MCF 10A (cell line): ENCODE measurements at regions of chr17 and their contacts with region 1.

Region 1: DNA sequence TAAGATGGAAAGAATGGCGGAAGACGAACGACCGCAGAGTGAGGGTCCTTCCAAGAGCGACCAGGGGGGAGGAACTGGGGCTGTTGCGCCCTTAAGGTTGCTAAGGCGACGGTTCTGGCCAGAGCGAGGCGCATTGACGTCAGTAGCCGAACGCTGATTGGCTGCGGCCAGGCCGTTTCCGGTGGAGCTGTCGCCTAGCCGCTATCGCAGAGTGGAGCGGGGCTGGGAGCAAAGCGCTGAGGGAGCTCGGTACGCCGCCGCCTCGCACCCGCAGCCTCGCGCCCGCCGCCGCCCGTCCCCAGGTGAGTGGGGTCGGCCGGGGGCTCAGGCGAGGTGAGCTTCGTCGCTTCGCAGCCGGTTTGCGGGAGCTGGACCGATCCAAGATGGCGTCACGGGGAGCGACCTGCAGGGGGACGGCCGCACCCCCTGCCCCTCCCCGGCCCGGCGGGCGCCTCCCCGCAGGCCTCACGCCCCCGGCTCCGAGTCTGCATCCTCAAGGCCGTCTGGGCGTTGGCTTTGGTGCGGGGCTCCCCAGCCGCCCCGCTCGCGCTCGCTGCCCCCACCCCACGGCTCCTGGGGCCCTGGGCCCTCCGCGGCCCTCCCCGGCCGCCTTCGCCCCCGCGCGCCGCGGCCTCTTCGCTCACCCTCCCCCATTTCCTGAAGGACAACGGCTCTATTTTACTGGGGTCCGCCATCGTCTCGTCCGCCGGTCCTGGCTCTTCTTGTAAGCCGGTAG is at the start of gene PRKAR1A:
- DNase-seq: peak; percentile 91
- H3K4me3 Mint-ChIP-seq: peak within 1 kb of the TSS; percentile 95
- H3K27ac Mint-ChIP-seq: peak within 1 kb of the TSS; percentile 98
- H3K4me1 Mint-ChIP-seq: peaks cover 25% of the 10 kb centered on the region
- H3K27me3 Mint-ChIP-seq: no peaks in the 10 kb centered on the region
- CTCF ChIP-seq: no peak
- total RNA-seq, gene PRKAR1A: 264 and 271 TPM in 2 replicates

Region 2: GRCh38 chr17:68383443-68384321 is 128.7 kb before region 1 on chr17:
- CTCF ChIA-PET with region 1: no interaction called
- POLR2A ChIA-PET with region 1: no interaction called
- intact Hi-C with region 1: no loop called
- DNase-seq: peak; percentile 76
- H3K4me3 Mint-ChIP-seq: no peak overlapping the region
- H3K27ac Mint-ChIP-seq: no peak overlapping the region
- H3K4me1 Mint-ChIP-seq: peaks cover 13% of the 10 kb centered on the region
- H3K27me3 Mint-ChIP-seq: no peaks in the 10 kb centered on the region
- CTCF ChIP-seq: no peak

Region 3: DNA sequence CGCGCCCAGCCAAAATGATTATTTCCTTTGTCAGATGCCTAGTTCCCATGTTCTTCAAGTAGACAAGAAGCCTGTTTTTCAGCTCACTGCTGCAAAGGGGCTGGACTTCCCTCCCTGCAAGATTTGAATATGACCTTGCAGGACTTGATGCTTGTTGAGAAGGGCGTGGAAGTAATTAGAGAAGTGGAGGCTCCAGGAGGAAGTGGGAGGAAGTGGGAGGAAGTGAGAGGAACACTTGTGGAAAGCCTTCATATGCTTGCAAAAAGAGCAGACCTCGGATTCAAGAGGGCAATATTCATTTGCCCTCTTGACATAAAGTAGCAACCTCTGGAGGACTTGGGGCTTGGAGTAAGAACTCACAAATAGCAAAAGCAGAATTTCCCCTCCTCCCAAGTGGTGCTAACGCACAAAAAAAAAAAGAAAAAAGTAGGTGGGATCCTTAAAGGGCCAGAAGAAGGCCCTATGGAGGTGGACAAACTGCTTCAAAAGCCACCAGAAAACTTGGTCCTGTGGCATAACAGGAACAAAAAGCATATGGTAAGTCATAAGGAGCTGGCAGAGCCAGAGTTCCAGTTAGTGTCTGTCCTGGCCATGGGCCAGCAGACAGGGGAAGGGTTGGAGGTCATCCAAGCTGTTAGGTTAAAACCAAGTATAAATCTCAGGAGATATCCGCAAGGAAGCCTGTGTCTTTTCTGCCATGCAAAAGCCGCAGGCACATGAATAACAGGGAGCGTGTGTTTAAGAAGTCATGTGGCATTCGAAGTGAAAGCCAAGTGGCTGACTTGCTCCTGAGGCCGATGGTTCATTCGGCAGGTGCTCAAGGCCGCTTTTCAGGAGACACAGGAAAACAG is 20.8 kb before region 1 on chr17:
- CTCF ChIA-PET with region 1: no interaction called
- POLR2A ChIA-PET with region 1: interaction called, 20 read pairs
- intact Hi-C with region 1: no loop called
- DNase-seq: peak; percentile 87
- H3K4me3 Mint-ChIP-seq: peak overlapping the region; percentile 29
- H3K27ac Mint-ChIP-seq: no peak overlapping the region
- H3K4me1 Mint-ChIP-seq: peaks cover 14% of the 10 kb centered on the region
- H3K27me3 Mint-ChIP-seq: peaks cover 4% of the 10 kb centered on the region
- CTCF ChIP-seq: no peak

Region 4: GRCh38 chr17:68526548-68526947 is 14.1 kb after region 1 on chr17:
- CTCF ChIA-PET with region 1: interaction called, 3 read pairs
- POLR2A ChIA-PET with region 1: interaction called, 10 read pairs
- intact Hi-C with region 1: no loop called
- DNase-seq: no peak
- H3K4me3 Mint-ChIP-seq: no peak overlapping the region
- H3K27ac Mint-ChIP-seq: no peak overlapping the region
- H3K4me1 Mint-ChIP-seq: no peaks in the 10 kb centered on the region
- H3K27me3 Mint-ChIP-seq: no peaks in the 10 kb centered on the region
- CTCF ChIP-seq: no peak

Region 5: GRCh38 chr17:68697850-68698361 is 185.5 kb after region 1 on chr17:
- CTCF ChIA-PET with region 1: no interaction called
- POLR2A ChIA-PET with region 1: interaction called, 14 read pairs
- intact Hi-C with region 1: no loop called
- DNase-seq: peak; percentile 81
- H3K4me3 Mint-ChIP-seq: peak overlapping the region; percentile 23
- H3K27ac Mint-ChIP-seq: peak overlapping the region; percentile 99
- H3K4me1 Mint-ChIP-seq: peaks cover 25% of the 10 kb centered on the region
- H3K27me3 Mint-ChIP-seq: no peaks in the 10 kb centered on the region
- CTCF ChIP-seq: no peak

Region 6: DNA sequence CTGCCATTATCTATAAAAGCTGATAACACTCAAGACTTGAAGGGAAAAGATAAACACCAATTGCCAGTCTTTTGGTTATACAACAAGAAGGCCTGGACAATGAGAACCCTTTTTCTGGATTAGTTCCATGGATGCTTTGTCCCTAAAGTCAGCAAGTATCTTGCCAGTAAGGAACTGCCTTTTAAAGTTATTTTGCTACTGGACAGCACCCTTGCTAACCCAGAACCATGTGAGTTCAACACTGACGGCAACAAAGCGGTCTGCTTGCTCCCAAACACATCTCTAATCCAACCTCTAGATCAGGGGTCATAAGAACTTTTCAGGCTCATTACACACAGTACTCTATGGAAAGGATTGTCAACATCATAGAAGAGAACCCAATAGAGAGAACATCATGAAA is 654.5 kb after region 1 on chr17:
- CTCF ChIA-PET with region 1: no interaction called
- POLR2A ChIA-PET with region 1: no interaction called
- intact Hi-C with region 1: no loop called
- DNase-seq: no peak
- H3K4me3 Mint-ChIP-seq: no peak overlapping the region
- H3K27ac Mint-ChIP-seq: no peak overlapping the region
- H3K4me1 Mint-ChIP-seq: no peaks in the 10 kb centered on the region
- H3K27me3 Mint-ChIP-seq: no peaks in the 10 kb centered on the region
- CTCF ChIP-seq: no peak